Left colon (tissue), 2 donors: ENCODE measurements at regions of chr6 and their contacts with region 1.

Region 1: GRCh38 chr6:20564269-20564668 is 30.0 kb downstream of the CDKAL1 start:
- DNase-seq: no peak
- ATAC-seq: no peak

Region 2: DNA sequence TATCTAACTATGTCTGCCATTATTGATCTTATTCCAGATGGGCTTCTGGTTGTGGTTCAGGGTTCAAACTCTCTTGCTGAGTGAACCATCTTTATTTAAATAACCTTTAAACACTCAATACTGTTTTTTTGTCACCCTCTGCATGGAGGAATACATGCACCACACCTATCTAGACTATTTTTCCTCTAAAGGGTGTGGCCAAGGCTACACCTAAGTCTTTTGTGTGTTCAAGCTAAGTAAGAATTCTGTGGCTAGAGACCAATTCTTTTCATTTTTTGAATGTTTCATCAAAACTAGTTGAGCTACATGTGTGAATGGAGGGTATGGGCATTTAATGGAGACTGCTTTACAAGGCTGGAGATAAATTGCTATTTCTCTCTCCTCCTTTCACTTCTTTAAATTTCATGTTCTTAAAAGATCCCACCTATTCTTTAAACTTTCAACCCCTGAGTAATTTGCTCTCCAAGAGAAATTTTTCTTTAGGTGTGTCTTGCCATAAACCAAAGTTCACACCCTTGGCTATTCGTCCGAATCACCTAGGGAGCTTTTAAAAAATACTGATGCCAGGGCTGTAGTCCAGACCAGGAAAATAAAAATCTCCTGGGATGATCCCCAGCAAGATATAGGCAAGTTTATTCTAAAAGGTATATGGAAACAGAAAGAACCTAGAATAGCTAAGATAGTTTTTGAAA is 327.2 kb before region 1 on chr6:
- intact Hi-C with region 1: no loop called
- DNase-seq: no peak
- ATAC-seq: peak; percentile 88

Region 3: DNA sequence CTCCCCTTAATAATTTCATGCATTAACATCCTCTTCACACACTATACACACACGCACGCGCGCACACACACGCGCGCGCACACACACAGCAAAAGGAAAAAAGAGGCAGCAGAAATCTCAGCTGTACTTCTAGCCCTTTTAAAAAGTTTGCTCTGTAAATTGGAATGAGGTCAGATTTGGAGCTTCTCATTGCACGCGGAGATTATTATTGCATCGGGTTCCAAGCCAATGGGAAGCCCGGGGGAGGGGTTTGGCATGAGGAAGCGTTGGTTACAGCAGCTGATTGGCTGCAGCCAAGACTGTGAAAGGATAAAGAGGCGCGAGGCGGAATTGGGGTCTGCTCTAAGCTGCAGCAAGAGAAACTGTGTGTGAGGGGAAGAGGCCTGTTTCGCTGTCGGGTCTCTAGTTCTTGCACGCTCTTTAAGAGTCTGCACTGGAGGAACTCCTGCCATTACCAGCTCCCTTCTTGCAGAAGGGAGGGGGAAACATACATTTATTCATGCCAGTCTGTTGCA is 1029.2 kb after region 1 on chr6 and contains the start of gene SOX4:
- intact Hi-C with region 1: loop called (anchors 5 to 10 kb)
- DNase-seq: peak; percentile 94 to 97
- ATAC-seq: peak; percentile 71
- total RNA-seq, gene SOX4: 28.9 to 44.6 TPM

Region 4: GRCh38 chr6:21935561-21936028 is 1371.3 kb after region 1 on chr6:
- intact Hi-C with region 1: loop called in 1 of 2 experiments (anchors 10 kb)
- DNase-seq: peak in 1 of 2 donors; percentile 49
- ATAC-seq: peak; percentile 83